ENCODE measurements at regions of chr15 and their contacts with region 1.

Region 1: GRCh38 chr15:91603384-91604080 is 250.0 kb upstream of the SLCO3A1 start:
- DNase-seq: no peak
- ATAC-seq: no peak
- H3K4me3 ChIP-seq: no peak overlapping the region
- H3K27ac ChIP-seq: no peak overlapping the region
- H3K4me1 ChIP-seq: no peaks in the 10 kb centered on the region
- H3K27me3 ChIP-seq: no peaks in the 10 kb centered on the region; the same call in 1 of the 2 replicates
- CTCF ChIP-seq: no peak
- POLR2A ChIP-seq: no peak
- RAD21 ChIP-seq: no peak

Region 2: DNA sequence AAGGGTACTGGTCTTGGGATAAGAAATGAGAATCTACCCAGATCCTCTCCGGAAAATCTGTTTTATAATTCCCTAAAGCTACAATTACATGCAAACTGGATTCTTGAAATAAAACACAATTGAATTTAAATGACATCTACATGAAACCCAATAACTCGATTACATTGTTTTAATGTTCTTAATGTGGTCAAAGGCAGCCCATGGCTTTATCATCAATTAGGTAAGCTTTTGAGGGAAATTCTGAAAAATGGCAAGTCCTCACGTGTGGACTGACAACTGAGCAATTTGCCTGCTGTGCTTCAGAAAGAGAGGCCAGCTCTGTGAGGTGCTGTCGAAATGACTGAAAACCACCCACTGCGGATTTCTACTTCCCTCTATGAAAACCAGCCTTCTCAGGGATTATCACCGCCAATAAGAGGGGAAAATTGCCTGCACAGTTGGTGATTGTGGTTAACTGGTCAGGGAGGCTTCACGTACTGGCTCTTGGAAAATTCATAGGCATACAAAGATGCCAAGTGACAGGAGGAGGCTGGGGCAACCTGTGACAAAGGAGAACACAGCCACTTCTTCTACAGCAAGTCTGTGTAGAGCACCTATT is 49.2 kb after region 1 on chr15:
- CTCF ChIA-PET with region 1: no interaction called
- POLR2A ChIA-PET with region 1: no interaction called
- dilution Hi-C with region 1: no loop called
- in situ Hi-C with region 1: loop called (anchors 5 kb)
- intact Hi-C with region 1: no loop called
- DNase-seq: no peak
- ATAC-seq: no peak
- H3K4me3 ChIP-seq: no peak overlapping the region
- H3K27ac ChIP-seq: no peak overlapping the region
- H3K4me1 ChIP-seq: no peaks in the 10 kb centered on the region
- H3K27me3 ChIP-seq: no peaks in the 10 kb centered on the region
- CTCF ChIP-seq: no peak
- POLR2A ChIP-seq: no peak
- RAD21 ChIP-seq: no peak